ENCODE measurements at regions of chr1 and their contacts with region 1.

Region 1: GRCh38 chr1:228734881-228735801 is at the start of gene RHOU:
- DNase-seq: peak; percentile 35 to 86 (median 60)
- ATAC-seq: peak; percentile 85
- H3K4me3 ChIP-seq: peak within 1 kb of the TSS; percentile 74
- H3K4me3 Mint-ChIP-seq: peak within 1 kb of the TSS; percentile 92
- H3K27ac ChIP-seq: no peak within 1 kb of the TSS
- H3K27ac Mint-ChIP-seq: peak within 1 kb of the TSS; percentile 81
- H3K4me1 ChIP-seq: peaks cover 28% of the 10 kb centered on the region
- H3K4me1 Mint-ChIP-seq: peaks cover 28% of the 10 kb centered on the region
- H3K27me3 ChIP-seq: no peaks in the 10 kb centered on the region
- H3K27me3 Mint-ChIP-seq: peaks cover 2% of the 10 kb centered on the region
- CTCF ChIP-seq: peak; percentile 36
- total RNA-seq, gene RHOU: 1.2 TPM

Region 2: GRCh38 chr1:229487181-229487580 is 752.0 kb after region 1 on chr1:
- CTCF ChIA-PET with region 1: no interaction called
- POLR2A ChIA-PET with region 1: no interaction called
- intact Hi-C with region 1: loop called in 1 of 2 experiments (anchors 5 kb)
- DNase-seq: no peak
- ATAC-seq: no peak
- H3K4me3 ChIP-seq: no peak overlapping the region
- H3K4me3 Mint-ChIP-seq: no peak overlapping the region
- H3K27ac ChIP-seq: no peak overlapping the region
- H3K27ac Mint-ChIP-seq: no peak overlapping the region
- H3K4me1 ChIP-seq: no peaks in the 10 kb centered on the region
- H3K4me1 Mint-ChIP-seq: peaks cover 2% of the 10 kb centered on the region
- H3K27me3 ChIP-seq: no peaks in the 10 kb centered on the region
- H3K27me3 Mint-ChIP-seq: no peaks in the 10 kb centered on the region
- CTCF ChIP-seq: no peak

Region 3: DNA sequence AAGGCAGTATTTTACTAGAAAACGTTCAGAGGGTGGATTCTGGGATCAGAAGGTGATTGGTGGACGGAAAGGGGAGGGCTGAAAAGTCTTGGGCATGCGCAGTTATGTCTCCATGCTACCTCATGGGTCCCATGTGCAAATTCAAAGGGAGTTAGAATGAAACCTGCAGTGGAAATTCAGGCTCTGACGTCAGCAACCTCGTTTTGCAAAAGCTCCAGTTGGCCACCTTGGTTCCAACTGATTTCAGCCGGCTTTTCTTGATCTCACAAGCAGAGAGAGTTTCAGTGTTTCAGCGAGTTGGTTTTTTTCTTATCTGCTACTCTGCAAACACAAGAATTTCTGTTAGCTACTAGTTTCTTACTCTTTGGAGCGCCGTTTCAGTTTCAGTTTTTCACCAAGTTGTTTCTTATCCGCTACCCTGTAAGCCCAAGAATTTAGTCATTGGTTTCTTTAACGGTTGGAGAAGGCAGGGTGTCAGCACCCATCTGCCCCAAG is 1760.8 kb after region 1 on chr1:
- CTCF ChIA-PET with region 1: no interaction called
- POLR2A ChIA-PET with region 1: no interaction called
- intact Hi-C with region 1: no loop called
- DNase-seq: peak in 1 of 14 experiments; percentile 13
- ATAC-seq: no peak
- H3K4me3 ChIP-seq: peak overlapping the region; percentile 14
- H3K4me3 Mint-ChIP-seq: no peak overlapping the region
- H3K27ac ChIP-seq: no peak overlapping the region
- H3K27ac Mint-ChIP-seq: no peak overlapping the region
- H3K4me1 ChIP-seq: no peaks in the 10 kb centered on the region
- H3K4me1 Mint-ChIP-seq: no peaks in the 10 kb centered on the region
- H3K27me3 ChIP-seq: peaks cover 6 to 12% of the 10 kb centered on the region in 2 experiments
- H3K27me3 Mint-ChIP-seq: peaks cover 45% of the 10 kb centered on the region
- CTCF ChIP-seq: no peak

Measured in CD4-positive, alpha-beta T cell (primary cell).